ENCODE measurements at regions of chr2 and their contacts with region 1.

Region 1: GRCh38 chr2:197113275-197113711 is 186.8 kb upstream of the PGAP1 start:
- DNase-seq: peak in 2 of 9 experiments; percentile 54 to 69
- ATAC-seq: peak; percentile 52
- H3K4me3 ChIP-seq: no peak overlapping the region
- H3K4me3 Mint-ChIP-seq: no peak overlapping the region
- H3K27ac ChIP-seq: no peak overlapping the region
- H3K27ac Mint-ChIP-seq: peak overlapping the region; percentile 84
- H3K4me1 ChIP-seq: peaks cover 14% of the 10 kb centered on the region
- H3K4me1 Mint-ChIP-seq: peaks cover 35% of the 10 kb centered on the region
- H3K27me3 ChIP-seq: no peaks in the 10 kb centered on the region
- H3K27me3 Mint-ChIP-seq: no peaks in the 10 kb centered on the region
- CTCF ChIP-seq: peak; percentile 75

Region 2: GRCh38 chr2:197124639-197125390 is 11.5 kb after region 1 on chr2:
- CTCF ChIA-PET with region 1: interaction called, 36 read pairs
- POLR2A ChIA-PET with region 1: no interaction called
- intact Hi-C with region 1: loop called in 1 of 2 experiments (anchors 2 kb)
- DNase-seq: no peak
- ATAC-seq: no peak
- H3K4me3 ChIP-seq: no peak overlapping the region
- H3K4me3 Mint-ChIP-seq: no peak overlapping the region
- H3K27ac ChIP-seq: no peak overlapping the region
- H3K27ac Mint-ChIP-seq: peak overlapping the region; percentile 77
- H3K4me1 ChIP-seq: peaks cover 28% of the 10 kb centered on the region
- H3K4me1 Mint-ChIP-seq: peaks cover 62% of the 10 kb centered on the region
- H3K27me3 ChIP-seq: no peaks in the 10 kb centered on the region
- H3K27me3 Mint-ChIP-seq: no peaks in the 10 kb centered on the region
- CTCF ChIP-seq: no peak

Region 3: GRCh38 chr2:197168705-197169104 is 55.4 kb after region 1 on chr2:
- CTCF ChIA-PET with region 1: interaction called, 42 read pairs
- POLR2A ChIA-PET with region 1: no interaction called
- intact Hi-C with region 1: loop called (anchors 1 kb)
- DNase-seq: peak; percentile 30 to 80 (median 75)
- ATAC-seq: peak; percentile 91
- H3K4me3 ChIP-seq: no peak overlapping the region
- H3K4me3 Mint-ChIP-seq: no peak overlapping the region
- H3K27ac ChIP-seq: peak overlapping the region in 1 of 2 experiments; percentile 32
- H3K27ac Mint-ChIP-seq: peak overlapping the region; percentile 85
- H3K4me1 ChIP-seq: peaks cover 66% of the 10 kb centered on the region
- H3K4me1 Mint-ChIP-seq: peaks cover 78% of the 10 kb centered on the region
- H3K27me3 ChIP-seq: no peaks in the 10 kb centered on the region
- H3K27me3 Mint-ChIP-seq: no peaks in the 10 kb centered on the region
- CTCF ChIP-seq: peak; percentile 65

Region 4: DNA sequence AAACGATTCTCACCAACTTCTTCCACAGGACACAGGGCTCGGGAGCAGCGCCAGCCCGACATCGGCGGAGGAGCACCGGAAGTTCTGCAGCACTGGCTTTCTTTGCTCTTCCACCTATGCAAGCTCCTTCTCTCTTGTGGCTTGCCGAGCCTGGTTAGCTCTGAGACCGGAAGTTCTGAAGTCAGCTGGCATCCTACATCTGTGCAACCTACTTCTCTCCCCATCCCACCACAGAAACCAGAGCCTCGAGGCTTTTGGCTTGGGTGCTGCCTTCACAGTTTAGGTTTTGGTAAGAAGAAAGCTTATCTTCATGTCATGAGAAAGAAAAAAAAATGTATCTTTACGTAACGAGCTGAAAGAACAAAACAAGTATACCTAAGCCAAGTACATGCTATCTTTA is 85.6 kb after region 1 on chr2:
- CTCF ChIA-PET with region 1: interaction called, 17 read pairs
- POLR2A ChIA-PET with region 1: interaction called, 5 read pairs
- intact Hi-C with region 1: no loop called
- DNase-seq: peak; percentile 76 to 98 (median 87)
- ATAC-seq: peak; percentile 80
- H3K4me3 ChIP-seq: peak overlapping the region in 1 of 2 experiments; percentile 41
- H3K4me3 Mint-ChIP-seq: peak overlapping the region; percentile 94
- H3K27ac ChIP-seq: peak overlapping the region; percentile 66 to 86
- H3K27ac Mint-ChIP-seq: peak overlapping the region; percentile 99
- H3K4me1 ChIP-seq: peaks cover 81% of the 10 kb centered on the region
- H3K4me1 Mint-ChIP-seq: peaks cover 90% of the 10 kb centered on the region
- H3K27me3 ChIP-seq: no peaks in the 10 kb centered on the region
- H3K27me3 Mint-ChIP-seq: no peaks in the 10 kb centered on the region
- CTCF ChIP-seq: no peak

Region 5: DNA sequence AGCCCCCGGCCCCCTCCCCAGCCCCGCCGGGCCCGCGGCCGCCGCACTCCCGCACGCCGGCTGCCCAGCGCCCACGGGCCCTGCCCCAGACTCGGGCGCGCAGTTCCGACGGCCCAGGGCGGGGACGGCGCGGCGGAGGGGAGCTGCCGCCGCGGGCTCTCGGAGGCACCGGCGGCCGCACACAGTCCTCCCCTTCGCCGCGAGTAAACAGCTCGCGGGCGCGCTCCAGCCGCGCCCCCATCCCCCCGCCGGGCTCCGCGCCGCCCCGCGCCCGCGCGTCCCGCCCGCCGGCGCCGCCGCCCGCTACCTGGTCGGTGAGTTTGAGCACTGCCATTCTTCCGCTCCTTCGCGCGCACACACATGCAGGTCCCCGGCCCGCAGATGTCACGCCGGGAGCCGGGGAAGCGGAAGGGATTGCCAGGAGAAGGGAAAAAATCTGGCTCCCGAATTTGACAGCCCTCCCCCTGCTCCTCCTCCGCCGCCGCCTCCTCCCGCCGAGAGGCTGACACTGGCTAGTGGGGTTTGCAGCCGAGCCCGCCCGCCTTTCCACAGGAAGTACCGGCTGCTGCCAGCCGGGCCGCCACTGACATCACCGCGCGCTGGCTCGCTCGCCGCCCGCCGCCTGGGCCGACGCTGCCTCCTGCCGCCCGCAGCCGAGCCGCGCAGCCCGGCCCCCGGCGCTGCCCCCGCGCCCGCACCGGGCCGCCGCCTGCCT is 197.1 kb after region 1 on chr2 and contains the start of gene ANKRD44:
- CTCF ChIA-PET with region 1: interaction called, 24 read pairs
- POLR2A ChIA-PET with region 1: interaction called, 8 read pairs
- intact Hi-C with region 1: loop called (anchors 1 to 2 kb)
- DNase-seq: peak; percentile 80 to 95 (median 88)
- ATAC-seq: peak; percentile 74
- H3K4me3 ChIP-seq: peak within 1 kb of the TSS; percentile 71 to 94
- H3K4me3 Mint-ChIP-seq: peak within 1 kb of the TSS; percentile 92
- H3K27ac ChIP-seq: peak within 1 kb of the TSS; percentile 86 to 88
- H3K27ac Mint-ChIP-seq: peak within 1 kb of the TSS; percentile 96
- H3K4me1 ChIP-seq: peaks cover 49% of the 10 kb centered on the region
- H3K4me1 Mint-ChIP-seq: peaks cover 75% of the 10 kb centered on the region
- H3K27me3 ChIP-seq: no peaks in the 10 kb centered on the region
- H3K27me3 Mint-ChIP-seq: no peaks in the 10 kb centered on the region
- CTCF ChIP-seq: no peak
- total RNA-seq, gene ANKRD44: 113 to 115 TPM

Region 6: DNA sequence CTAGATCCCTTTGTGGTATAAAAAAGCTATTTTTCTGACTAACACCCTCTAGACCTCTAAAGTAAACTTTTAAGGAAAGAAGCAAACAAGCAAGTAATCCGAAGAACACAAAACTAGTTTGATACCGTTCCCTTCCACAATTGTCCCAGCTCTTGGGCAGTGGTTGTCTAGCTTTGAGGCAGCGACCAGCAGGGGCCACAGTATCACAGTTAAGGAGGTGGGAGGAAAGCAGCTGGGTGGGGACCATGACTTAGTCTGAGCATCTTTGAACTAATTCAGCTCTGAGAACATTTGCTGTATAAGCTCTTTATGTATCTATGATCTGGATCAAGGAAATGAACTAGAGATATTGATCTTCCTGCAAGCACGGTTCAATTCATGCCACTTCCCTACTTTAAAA is 270.5 kb after region 1 on chr2:
- CTCF ChIA-PET with region 1: interaction called, 40 read pairs
- POLR2A ChIA-PET with region 1: no interaction called
- intact Hi-C with region 1: no loop called
- DNase-seq: no peak
- ATAC-seq: no peak
- H3K4me3 ChIP-seq: no peak overlapping the region
- H3K4me3 Mint-ChIP-seq: no peak overlapping the region
- H3K27ac ChIP-seq: no peak overlapping the region
- H3K27ac Mint-ChIP-seq: no peak overlapping the region
- H3K4me1 ChIP-seq: no peaks in the 10 kb centered on the region
- H3K4me1 Mint-ChIP-seq: no peaks in the 10 kb centered on the region
- H3K27me3 ChIP-seq: no peaks in the 10 kb centered on the region
- H3K27me3 Mint-ChIP-seq: no peaks in the 10 kb centered on the region
- CTCF ChIP-seq: no peak

Measured in CD8-positive, alpha-beta T cell (primary cell).